ENCODE measurements at regions of chr1 and their contacts with region 1.

Region 1: DNA sequence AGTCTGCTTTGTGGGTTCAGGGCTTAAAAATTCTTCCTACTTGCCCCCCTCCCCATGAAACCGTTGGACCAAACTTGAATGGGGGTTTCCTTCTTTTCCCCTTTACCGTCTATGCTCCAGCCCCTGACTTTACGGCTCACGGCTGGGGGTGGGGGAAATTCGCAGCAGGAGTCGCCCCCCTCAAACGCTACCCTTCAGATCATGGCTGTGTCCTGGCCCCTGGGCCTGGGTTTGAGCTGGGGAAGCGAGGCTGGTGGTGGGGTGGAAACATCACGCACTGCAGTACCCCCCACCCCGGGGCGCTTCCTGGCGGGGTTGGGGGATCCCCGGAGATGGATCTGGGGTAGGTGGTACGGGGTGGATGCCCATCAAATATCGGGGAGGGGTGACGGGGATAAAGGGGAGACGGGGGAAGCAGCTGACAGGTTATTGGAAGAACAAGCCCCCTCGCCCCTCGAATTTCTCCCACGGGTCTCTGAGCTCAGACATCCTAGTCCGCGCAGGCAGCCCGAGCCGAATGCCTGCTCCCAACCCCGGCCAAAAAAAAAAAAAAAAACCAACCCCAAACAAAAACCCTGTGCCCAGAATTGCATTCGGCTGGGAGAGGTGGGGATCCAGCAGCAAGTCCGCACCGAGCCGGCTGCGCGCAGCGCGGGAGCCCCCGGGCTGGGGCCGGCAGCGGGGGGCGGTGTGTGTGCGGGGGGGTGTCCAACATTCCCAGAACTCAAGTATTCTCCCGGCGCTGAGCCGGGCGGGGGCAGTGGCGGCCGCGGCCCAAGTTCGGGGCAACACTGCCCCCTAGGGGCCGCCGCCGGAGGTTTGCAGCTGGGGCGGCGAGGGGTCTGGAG is 59.0 kb upstream of the ACOT11 start:
- DNase-seq: peak; percentile 78

Region 2: DNA sequence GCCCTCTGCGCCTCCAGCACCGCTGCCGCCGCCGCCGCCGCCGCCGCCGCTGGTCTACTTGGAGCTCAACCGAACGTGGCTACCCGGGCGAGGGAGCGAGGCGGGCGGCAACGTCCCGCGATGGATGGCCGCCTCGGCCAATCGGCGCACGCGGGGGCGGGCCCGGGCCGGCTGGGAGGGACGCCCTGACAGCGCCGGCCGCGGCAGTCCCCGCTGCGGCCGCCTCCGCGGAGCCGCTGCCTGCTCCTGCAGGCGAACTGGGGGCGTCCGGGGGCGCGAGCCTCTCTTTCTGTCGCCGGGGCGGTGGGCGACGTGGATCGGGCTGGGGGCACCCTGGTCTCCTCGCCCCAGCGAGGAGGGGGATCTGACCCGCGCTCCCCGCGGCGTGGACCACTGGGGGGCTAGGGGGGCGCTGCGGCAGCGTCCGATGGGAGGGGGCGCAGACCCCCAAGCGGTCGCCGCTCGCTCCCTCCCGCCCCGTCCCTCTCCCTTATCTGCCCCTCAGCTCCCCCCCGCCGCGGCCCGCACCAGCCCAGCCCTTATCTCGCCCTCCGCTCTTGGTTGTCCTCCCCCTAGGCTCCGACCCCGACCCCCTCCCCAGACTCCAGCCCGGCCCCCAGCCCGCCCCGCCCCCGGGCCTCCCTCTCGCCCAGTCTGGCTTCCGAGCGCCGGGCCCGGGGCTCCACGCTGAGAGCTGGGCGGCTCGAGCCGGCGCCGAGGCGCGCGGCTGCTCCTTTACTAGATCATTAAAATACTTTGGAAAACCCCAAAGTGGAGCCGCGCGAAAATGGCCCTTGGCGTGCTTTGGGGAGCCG is 82.5 kb before region 1 on chr1 and contains the start of gene SSBP3:
- in situ Hi-C with region 1: loop called (anchors 10 kb)
- DNase-seq: peak; percentile 91
- total RNA-seq, gene SSBP3: 64.0 and 71.2 TPM in 2 replicates

Region 3: GRCh38 chr1:54429179-54429520 is 59.9 kb before region 1 on chr1:
- in situ Hi-C with region 1: no loop called
- DNase-seq: no peak

Region 4: DNA sequence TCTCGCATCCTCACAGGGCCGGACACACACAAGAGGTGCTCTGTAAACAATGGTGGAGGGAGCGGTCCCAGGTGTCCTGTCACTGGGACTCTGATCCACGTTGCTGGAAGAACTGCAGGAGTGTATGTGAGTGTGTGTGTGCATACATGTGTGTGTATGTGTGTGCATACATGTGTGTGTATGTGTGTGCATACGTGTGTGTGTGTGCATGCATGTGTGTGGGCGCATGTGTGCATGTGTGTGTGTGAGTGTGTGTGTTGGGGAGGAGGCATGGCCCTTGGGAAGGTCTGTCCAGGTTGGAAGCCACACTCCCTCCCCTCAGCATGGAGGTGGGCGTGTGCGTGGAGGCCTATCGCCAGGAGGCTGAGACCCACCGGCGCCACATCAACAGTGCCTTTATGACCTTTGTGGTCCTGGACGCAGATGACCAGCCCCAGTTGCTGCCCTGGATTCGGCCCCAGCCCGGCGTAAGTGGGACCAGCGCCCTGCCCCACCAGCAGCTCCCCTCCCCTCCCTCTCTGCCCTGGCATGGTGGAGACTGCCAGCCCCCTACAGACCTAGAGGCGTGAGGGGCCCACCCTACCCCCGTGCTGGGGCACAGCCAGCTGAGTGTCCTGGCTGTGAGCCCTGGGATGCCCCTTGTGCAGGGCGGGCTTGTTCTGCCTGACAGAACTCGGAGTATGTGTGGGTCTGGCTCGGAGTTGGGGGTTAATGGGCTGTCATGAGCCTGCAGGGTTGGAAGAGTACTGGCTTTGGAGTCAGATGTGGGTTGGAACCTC is 112.1 kb after region 1 on chr1:
- in situ Hi-C with region 1: no loop called
- DNase-seq: no peak

Measured in G401 (cell line).